PC-9 (cell line): ENCODE measurements at regions of chr5 and their contacts with region 1.

Region 1: DNA sequence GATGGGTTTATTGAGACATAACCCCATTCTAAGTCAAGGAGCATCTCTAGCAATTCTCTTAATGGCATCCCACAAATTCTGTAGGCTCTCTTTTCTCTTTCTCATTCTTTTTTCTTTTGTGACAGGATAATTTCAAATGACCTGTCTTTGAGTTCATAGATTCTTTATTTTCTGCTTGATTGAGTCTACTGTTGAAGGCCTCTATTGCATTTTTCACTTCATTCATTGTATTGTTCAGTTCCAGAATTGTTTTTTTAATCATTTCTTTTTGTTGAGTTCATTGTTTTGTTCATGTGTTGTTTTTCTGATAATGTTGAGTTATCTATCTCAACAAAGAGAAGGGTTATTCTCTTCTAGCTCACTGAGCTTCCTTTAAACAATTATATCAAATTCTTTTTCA is 144.7 kb upstream of the IL12B start:
- DNase-seq: no peak
- H3K4me3 ChIP-seq: no peak overlapping the region
- H3K27ac ChIP-seq: no peak overlapping the region
- H3K4me1 ChIP-seq: no peaks in the 10 kb centered on the region
- H3K27me3 ChIP-seq: no peaks in the 10 kb centered on the region
- CTCF ChIP-seq: no peak

Region 2: GRCh38 chr5:159539678-159540077 is 64.7 kb after region 1 on chr5:
- CTCF ChIA-PET with region 1: no interaction called
- POLR2A ChIA-PET with region 1: no interaction called
- intact Hi-C with region 1: no loop called
- DNase-seq: no peak
- H3K4me3 ChIP-seq: no peak overlapping the region
- H3K27ac ChIP-seq: no peak overlapping the region
- H3K4me1 ChIP-seq: peaks cover 10% of the 10 kb centered on the region
- H3K27me3 ChIP-seq: no peaks in the 10 kb centered on the region
- CTCF ChIP-seq: no peak

Region 3: DNA sequence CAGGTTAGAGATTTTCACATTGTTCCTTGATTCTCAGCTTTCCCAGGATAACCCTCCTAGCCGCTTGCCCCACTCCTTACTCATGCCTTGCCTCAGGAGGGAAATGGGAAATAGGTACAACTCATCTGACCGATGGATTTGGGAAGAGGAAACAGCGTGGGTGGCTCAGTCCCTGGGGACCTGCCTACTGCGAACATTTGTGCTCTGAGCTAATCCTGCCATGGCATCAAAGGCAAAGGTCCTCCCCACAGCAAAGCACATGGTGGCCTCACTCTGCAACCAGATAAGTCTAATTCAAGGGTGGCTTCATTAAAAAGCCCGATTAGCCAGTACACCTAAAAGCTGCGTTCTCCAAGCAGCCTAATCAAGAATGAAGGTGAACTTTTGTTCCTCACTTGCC is 358.8 kb after region 1 on chr5:
- CTCF ChIA-PET with region 1: no interaction called
- POLR2A ChIA-PET with region 1: interaction called, 21 read pairs
- intact Hi-C with region 1: no loop called
- DNase-seq: no peak
- H3K4me3 ChIP-seq: no peak overlapping the region
- H3K27ac ChIP-seq: no peak overlapping the region
- H3K4me1 ChIP-seq: 0 out of 2 replicates have a peak, but pooled peaks cover 2% of the 10 kb centered on the region
- H3K27me3 ChIP-seq: no peaks in the 10 kb centered on the region
- CTCF ChIP-seq: no peak